T-cell (primary cell): ENCODE measurements at regions of chr17 and their contacts with region 1.

Region 1: DNA sequence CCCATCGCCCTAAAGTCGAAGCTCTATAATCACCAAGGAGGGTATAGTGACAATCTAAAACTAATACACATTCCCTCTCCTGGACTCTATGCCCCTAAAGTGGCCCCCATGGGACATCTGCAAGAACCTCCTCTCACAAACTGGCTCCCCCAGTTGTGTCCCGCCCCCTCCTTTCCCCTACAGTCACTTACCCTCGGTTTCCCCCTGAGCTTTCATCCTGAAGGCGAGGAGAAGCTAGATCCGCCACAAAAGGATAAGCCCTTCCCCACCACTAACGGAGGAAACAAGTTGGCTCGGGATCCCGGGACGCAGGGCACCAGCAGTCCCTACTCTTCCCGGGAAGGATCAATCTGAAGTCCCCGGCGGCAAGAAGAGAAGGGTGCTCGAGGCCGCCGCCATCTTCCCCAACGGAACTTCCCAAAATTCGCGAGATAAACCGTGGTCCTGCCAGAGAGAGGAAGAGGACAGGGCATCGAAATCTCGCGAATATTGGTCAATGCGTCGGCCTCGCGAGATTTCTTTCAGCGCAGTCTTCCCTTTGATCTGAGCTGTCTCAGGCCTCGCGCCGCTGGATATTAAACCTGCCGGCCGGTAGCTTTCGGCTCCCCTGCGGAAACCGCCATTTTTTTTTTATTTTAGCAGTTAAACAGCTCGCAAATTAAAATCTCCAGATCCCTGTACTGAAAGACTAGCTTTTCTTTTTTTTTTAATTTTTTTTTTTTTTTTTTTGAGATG is at the start of gene MED1:
- DNase-seq: peak; percentile 74 to 97 (median 88)
- ATAC-seq: peak; percentile 92 to 97 (median 95)
- H3K4me3 ChIP-seq: peak within 1 kb of the TSS; percentile 87 to 90
- H3K4me3 Mint-ChIP-seq: peak within 1 kb of the TSS; percentile 96 to 98 (median 98)
- H3K27ac ChIP-seq: peak within 1 kb of the TSS; percentile 89
- H3K27ac Mint-ChIP-seq: peak within 1 kb of the TSS; percentile 98
- H3K4me1 ChIP-seq: peaks cover 9 to 29% of the 10 kb centered on the region in 2 experiments
- H3K4me1 Mint-ChIP-seq: peaks cover 35 to 42% (median 36%) of the 10 kb centered on the region in 3 donors
- H3K27me3 ChIP-seq: no peaks in the 10 kb centered on the region
- H3K27me3 Mint-ChIP-seq: no peaks in the 10 kb centered on the region
- total RNA-seq, gene MED1: 41.4 to 55.6 (median 52.6) TPM

Region 2: DNA sequence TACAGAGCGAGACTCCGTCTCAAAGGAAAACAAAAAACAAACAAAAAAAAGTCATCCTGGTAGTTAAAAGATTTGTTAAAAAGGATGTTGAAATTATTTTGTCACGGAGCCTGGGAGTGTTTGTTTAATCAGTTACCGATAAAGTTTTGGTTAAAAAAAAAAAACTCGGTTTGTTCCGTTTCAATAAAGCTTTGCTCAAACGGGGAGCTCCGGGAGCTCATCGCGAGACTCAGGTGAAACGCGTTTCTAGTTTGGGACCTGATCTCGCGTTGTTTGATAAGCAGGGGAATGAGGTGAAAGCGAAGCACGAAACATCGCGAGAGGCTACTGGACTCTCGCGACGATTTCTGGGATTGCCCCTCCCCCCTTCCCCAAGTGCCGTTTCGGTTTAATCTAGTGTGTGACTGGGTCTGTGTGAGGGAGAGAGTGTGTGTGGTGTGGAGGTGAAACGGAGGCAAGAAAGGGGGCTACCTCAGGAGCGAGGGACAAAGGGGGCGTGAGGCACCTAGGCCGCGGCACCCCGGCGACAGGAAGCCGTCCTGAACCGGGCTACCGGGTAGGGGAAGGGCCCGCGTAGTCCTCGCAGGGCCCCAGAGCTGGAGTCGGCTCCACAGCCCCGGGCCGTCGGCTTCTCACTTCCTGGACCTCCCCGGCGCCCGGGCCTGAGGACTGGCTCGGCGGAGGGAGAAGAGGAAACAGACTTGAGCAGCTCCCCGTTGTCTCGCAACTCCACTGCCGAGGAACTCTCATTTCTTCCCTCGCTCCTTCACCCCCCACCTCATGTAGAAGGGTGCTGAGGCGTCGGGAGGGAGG is 10.3 kb after region 1 on chr17 and contains the start of gene CDK12:
- CTCF ChIA-PET with region 1: interaction called, 3 to 23 read pairs
- POLR2A ChIA-PET with region 1: interaction called, 9 to 26 read pairs
- DNase-seq: peak; percentile 87 to 99 (median 94)
- ATAC-seq: peak; percentile 85 to 89 (median 87)
- H3K4me3 ChIP-seq: peak within 1 kb of the TSS; percentile 97 to 100
- H3K4me3 Mint-ChIP-seq: peak within 1 kb of the TSS; percentile 92 to 94 (median 93)
- H3K27ac ChIP-seq: peak within 1 kb of the TSS; percentile 98
- H3K27ac Mint-ChIP-seq: peak within 1 kb of the TSS; percentile 94 to 98
- H3K4me1 ChIP-seq: peaks cover 17 to 33% of the 10 kb centered on the region in 2 experiments
- H3K4me1 Mint-ChIP-seq: peaks cover 34 to 44% (median 41%) of the 10 kb centered on the region in 3 donors
- H3K27me3 ChIP-seq: no peaks in the 10 kb centered on the region
- H3K27me3 Mint-ChIP-seq: no peaks in the 10 kb centered on the region
- total RNA-seq, gene CDK12: 95.6 to 108 (median 104) TPM

Region 3: GRCh38 chr17:39473310-39473709 is 22.3 kb after region 1 on chr17:
- CTCF ChIA-PET with region 1: no interaction called
- POLR2A ChIA-PET with region 1: interaction called, 5 to 10 read pairs
- DNase-seq: no peak
- ATAC-seq: no peak
- H3K4me3 ChIP-seq: no peak overlapping the region
- H3K4me3 Mint-ChIP-seq: no peak overlapping the region
- H3K27ac ChIP-seq: no peak overlapping the region
- H3K27ac Mint-ChIP-seq: no peak overlapping the region
- H3K4me1 ChIP-seq: no peaks in the 10 kb centered on the region
- H3K4me1 Mint-ChIP-seq: peaks cover 0 to 14% (median 7%) of the 10 kb centered on the region in 3 donors
- H3K27me3 ChIP-seq: no peaks in the 10 kb centered on the region
- H3K27me3 Mint-ChIP-seq: no peaks in the 10 kb centered on the region